Common myeloid progenitor, CD34-positive (primary cell): ENCODE measurements at regions of chr4 and their contacts with region 1.

Region 1: GRCh38 chr4:55424791-55425190 is 29.0 kb downstream of the TMEM165 start:
- DNase-seq: no peak
- H3K4me3 ChIP-seq: no peak overlapping the region
- H3K27ac ChIP-seq: no peak overlapping the region
- H3K4me1 ChIP-seq: peaks cover 0 to 4% (median 0%) of the 10 kb centered on the region in 4 experiments
- H3K27me3 ChIP-seq: no peaks in the 10 kb centered on the region

Region 2: GRCh38 chr4:55269995-55270394 is 154.8 kb before region 1 on chr4:
- CTCF ChIA-PET with region 1: no interaction called
- POLR2A ChIA-PET with region 1: no interaction called
- DNase-seq: no peak
- H3K4me3 ChIP-seq: no peak overlapping the region
- H3K27ac ChIP-seq: no peak overlapping the region
- H3K4me1 ChIP-seq: no peaks in the 10 kb centered on the region
- H3K27me3 ChIP-seq: peaks cover 2 to 22% (median 16%) of the 10 kb centered on the region in 5 experiments

Region 3: GRCh38 chr4:55336136-55337034 is 88.4 kb before region 1 on chr4:
- CTCF ChIA-PET with region 1: no interaction called
- POLR2A ChIA-PET with region 1: no interaction called
- DNase-seq: peak; percentile 72 to 90 (median 87)
- H3K4me3 ChIP-seq: peak overlapping the region in 2 of 7 experiments; percentile 8 to 16
- H3K27ac ChIP-seq: peak overlapping the region; percentile 66 to 80
- H3K4me1 ChIP-seq: peaks cover 0 to 12% (median 11%) of the 10 kb centered on the region in 4 experiments
- H3K27me3 ChIP-seq: no peaks in the 10 kb centered on the region

Region 4: GRCh38 chr4:55409468-55410171 is 15.2 kb before region 1 on chr4:
- CTCF ChIA-PET with region 1: interaction called, 12 read pairs
- POLR2A ChIA-PET with region 1: no interaction called
- DNase-seq: peak; percentile 32 to 50 (median 39)
- H3K4me3 ChIP-seq: no peak overlapping the region
- H3K27ac ChIP-seq: no peak overlapping the region
- H3K4me1 ChIP-seq: no peaks in the 10 kb centered on the region
- H3K27me3 ChIP-seq: no peaks in the 10 kb centered on the region

Region 5: GRCh38 chr4:55468724-55469123 is 43.9 kb after region 1 on chr4:
- CTCF ChIA-PET with region 1: no interaction called
- POLR2A ChIA-PET with region 1: no interaction called
- DNase-seq: no peak
- H3K4me3 ChIP-seq: no peak overlapping the region
- H3K27ac ChIP-seq: no peak overlapping the region
- H3K4me1 ChIP-seq: no peaks in the 10 kb centered on the region
- H3K27me3 ChIP-seq: no peaks in the 10 kb centered on the region